ENCODE measurements at regions of chr10 and their contacts with region 1.

Region 1: DNA sequence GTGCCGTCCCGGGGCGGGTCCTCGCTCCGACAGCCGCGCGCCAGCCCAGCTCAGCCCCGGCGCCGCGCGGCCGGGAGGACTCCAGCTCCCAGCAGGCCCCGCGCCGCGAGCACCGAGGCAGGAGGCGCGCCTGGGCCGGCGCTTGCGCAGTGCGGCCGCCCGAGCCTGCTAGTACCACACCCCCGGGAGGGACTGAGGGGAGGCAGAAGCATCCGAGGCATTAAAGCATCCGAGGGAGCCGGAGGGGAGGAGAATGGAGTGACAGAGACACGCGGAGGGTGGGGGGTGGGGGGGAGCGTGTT is at the start of gene GRK5:
- DNase-seq: peak; percentile 91 to 98
- H3K4me3 ChIP-seq: peak within 1 kb of the TSS; percentile 91 to 99
- H3K27ac ChIP-seq: peak within 1 kb of the TSS; percentile 95 to 97
- H3K4me1 ChIP-seq: peaks cover 2 to 28% of the 10 kb centered on the region in 2 donors
- H3K27me3 ChIP-seq: no peaks in the 10 kb centered on the region
- CTCF ChIP-seq: no peak
- total RNA-seq, gene GRK5: 75.5 TPM

Region 2: GRCh38 chr10:119246862-119247549 is 39.7 kb after region 1 on chr10:
- intact Hi-C with region 1: loop called (anchors 1 kb)
- DNase-seq: peak; percentile 39 to 95
- H3K4me3 ChIP-seq: peak overlapping the region in 1 of 2 donors; percentile 31
- H3K27ac ChIP-seq: peak overlapping the region; percentile 92 to 93
- H3K4me1 ChIP-seq: peaks cover 15 to 46% of the 10 kb centered on the region in 2 donors
- H3K27me3 ChIP-seq: no peaks in the 10 kb centered on the region
- CTCF ChIP-seq: no peak

Region 3: GRCh38 chr10:119305860-119306513 is 98.7 kb after region 1 on chr10:
- intact Hi-C with region 1: loop called (anchors 2 kb)
- DNase-seq: peak; percentile 92 to 97
- H3K4me3 ChIP-seq: peak overlapping the region in 1 of 2 donors; percentile 28
- H3K27ac ChIP-seq: peak overlapping the region; percentile 85 to 95
- H3K4me1 ChIP-seq: peaks cover 32 to 87% of the 10 kb centered on the region in 2 donors
- H3K27me3 ChIP-seq: no peaks in the 10 kb centered on the region
- CTCF ChIP-seq: no peak

Region 4: DNA sequence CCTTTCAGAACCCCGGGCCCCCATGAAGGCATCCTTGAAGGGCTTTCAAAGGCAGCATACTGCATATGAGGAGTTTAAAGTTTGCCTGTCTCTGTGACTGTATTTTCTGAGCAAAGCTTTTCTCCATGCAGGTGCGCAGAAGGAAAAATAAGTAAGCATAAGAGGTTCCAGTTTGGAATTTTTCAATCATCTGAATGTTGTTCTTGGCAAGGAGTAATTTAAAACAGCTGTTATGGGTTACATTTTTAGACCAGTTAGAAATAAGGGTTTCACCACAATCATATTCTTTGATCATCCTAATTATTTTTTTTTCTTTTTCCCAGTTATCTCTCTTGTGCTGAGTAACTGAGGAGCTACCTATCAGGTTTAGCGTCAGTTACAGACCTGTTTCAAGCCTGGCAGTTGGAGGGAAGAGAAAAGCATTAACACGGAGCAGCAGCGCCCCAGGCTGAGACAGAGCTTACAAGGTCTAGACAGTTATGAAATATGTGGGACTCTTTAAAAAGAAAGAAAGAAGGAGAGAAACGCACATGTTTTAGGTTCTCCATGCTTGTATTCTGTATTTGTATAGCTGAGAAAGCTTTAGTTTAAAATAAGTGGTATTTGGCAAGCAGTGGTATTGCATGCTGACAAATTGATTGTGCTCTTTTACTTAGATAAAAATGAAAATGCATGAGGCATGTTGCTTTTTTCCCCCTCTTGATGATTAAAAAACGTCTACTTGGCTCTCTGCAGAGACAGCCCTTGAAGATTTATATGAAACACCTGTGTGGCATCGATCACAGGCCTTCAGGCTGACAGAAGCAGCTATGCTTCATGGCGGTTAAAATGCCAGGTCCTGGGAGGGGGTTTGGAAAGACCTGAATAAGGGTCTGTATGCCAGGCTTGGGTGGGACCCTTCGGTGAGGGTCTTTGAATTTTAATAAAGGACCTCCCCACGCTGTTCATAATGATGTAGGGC is 157.6 kb after region 1 on chr10:
- intact Hi-C with region 1: loop called (anchors 2 kb)
- DNase-seq: no peak
- H3K4me3 ChIP-seq: no peak overlapping the region
- H3K27ac ChIP-seq: peak overlapping the region in 1 of 2 donors; percentile 3
- H3K4me1 ChIP-seq: peaks cover 14 to 45% of the 10 kb centered on the region in 2 donors
- H3K27me3 ChIP-seq: no peaks in the 10 kb centered on the region
- CTCF ChIP-seq: peak in 1 of 3 experiments; percentile 26

Region 5: GRCh38 chr10:119596537-119597404 is 389.5 kb after region 1 on chr10 and contains the start of gene TIAL1:
- intact Hi-C with region 1: loop called (anchors 5 kb)
- DNase-seq: peak; percentile 97 to 99
- H3K4me3 ChIP-seq: peak within 1 kb of the TSS; percentile 64 to 70
- H3K27ac ChIP-seq: peak within 1 kb of the TSS; percentile 95 to 98
- H3K4me1 ChIP-seq: peaks cover 0 to 31% of the 10 kb centered on the region in 2 donors
- H3K27me3 ChIP-seq: no peaks in the 10 kb centered on the region
- CTCF ChIP-seq: no peak
- total RNA-seq, gene TIAL1: 35.5 TPM

Measured in ascending aorta (tissue), 2 donors.